ENCODE measurements at regions of chr5 and their contacts with region 1.

Region 1: DNA sequence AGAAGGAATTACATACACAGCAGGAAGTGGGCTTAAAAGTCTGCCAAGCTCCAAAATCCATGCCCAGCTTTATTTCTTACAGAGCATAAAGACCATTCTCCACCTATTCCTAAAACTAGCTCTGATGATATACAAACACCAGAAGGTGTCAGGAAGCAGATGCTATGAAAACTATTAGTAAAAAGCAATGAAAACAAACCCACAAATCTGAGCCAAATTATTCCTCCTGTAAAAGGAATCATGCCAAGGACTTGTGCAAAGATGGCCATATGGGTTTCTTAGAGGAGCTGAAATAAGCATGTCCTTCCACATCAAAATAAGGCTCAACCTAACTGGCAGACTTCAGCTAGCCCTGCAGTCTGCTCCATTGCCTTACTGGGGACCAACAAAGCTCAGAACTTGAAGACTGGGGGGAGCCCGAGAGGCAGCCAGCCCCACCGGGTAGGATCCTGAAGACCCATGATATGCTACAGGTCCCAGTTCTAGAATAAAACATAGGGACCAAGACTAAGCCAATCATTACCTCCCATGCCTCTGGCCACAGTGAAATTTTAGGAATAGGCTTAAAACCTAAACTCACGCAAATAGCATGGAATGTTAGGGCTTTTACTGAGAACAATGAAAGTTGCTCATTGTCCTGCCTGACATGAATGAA is 42.8 kb upstream of the GABRP start:
- DNase-seq: no peak
- H3K4me3 ChIP-seq: no peak overlapping the region
- H3K27ac ChIP-seq: no peak overlapping the region
- H3K4me1 ChIP-seq: peaks cover 18% of the 10 kb centered on the region
- H3K27me3 ChIP-seq: peaks cover 1% of the 10 kb centered on the region
- CTCF ChIP-seq: no peak

Region 2: DNA sequence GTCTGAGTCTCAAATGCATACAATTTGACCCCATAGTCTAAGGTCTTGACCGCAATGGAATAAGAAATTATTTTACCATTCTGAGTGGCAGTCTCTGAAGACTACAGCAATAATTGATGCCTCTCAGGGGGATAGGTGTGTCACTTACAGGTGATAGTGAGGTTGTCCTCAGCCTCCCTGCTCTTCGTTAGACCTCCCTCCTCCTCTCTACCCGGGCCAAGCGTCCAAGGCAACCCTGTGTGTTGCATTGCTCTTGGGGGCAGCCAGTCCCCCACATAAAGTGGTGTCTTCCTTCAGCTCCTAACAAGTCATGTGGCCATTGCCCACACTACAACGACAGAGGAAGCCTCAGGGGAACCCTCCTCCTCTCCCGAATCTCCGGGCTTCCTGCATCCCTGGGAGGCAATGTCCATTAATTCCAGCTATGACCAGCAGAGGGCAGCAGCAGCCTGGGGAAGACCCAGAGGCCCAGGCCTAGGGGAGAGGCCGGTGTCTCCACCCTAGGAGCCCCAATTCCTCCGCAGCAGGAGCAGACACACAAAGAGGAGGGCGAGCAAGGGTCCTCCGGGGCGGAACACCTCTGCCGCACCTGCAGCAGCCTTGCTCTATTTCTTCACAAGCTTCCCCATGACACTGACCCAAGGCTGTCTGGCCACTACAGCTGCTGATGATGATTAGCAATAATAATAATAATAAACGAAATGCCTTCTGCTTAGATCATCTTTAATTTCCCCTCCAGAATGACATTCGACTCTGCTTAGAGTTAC is 102.0 kb before region 1 on chr5:
- CTCF ChIA-PET with region 1: no interaction called
- dilution Hi-C with region 1: no loop called
- in situ Hi-C with region 1: no loop called
- intact Hi-C with region 1: loop called (anchors 1 kb)
- DNase-seq: peak; percentile 35
- H3K4me3 ChIP-seq: no peak overlapping the region
- H3K27ac ChIP-seq: no peak overlapping the region
- H3K4me1 ChIP-seq: peaks cover 7% of the 10 kb centered on the region
- H3K27me3 ChIP-seq: no peaks in the 10 kb centered on the region
- CTCF ChIP-seq: peak; percentile 70 to 92

Region 3: GRCh38 chr5:170791325-170791954 is 50.8 kb after region 1 on chr5:
- CTCF ChIA-PET with region 1: interaction called, 3 read pairs
- dilution Hi-C with region 1: no loop called
- in situ Hi-C with region 1: no loop called
- intact Hi-C with region 1: loop called (anchors 1 kb)
- DNase-seq: peak; percentile 48
- H3K4me3 ChIP-seq: no peak overlapping the region
- H3K27ac ChIP-seq: no peak overlapping the region
- H3K4me1 ChIP-seq: no peaks in the 10 kb centered on the region
- H3K27me3 ChIP-seq: no peaks in the 10 kb centered on the region
- CTCF ChIP-seq: peak; percentile 47 to 68

Region 4: GRCh38 chr5:171152382-171152781 is 411.7 kb after region 1 on chr5:
- CTCF ChIA-PET with region 1: no interaction called
- dilution Hi-C with region 1: no loop called
- in situ Hi-C with region 1: no loop called
- intact Hi-C with region 1: loop called (anchors 5 kb)
- DNase-seq: peak; percentile 19
- H3K4me3 ChIP-seq: no peak overlapping the region
- H3K27ac ChIP-seq: no peak overlapping the region
- H3K4me1 ChIP-seq: no peaks in the 10 kb centered on the region
- H3K27me3 ChIP-seq: no peaks in the 10 kb centered on the region
- CTCF ChIP-seq: peak; percentile 14 to 47